ENCODE measurements at regions of chr10 and their contacts with region 1.

Region 1: DNA sequence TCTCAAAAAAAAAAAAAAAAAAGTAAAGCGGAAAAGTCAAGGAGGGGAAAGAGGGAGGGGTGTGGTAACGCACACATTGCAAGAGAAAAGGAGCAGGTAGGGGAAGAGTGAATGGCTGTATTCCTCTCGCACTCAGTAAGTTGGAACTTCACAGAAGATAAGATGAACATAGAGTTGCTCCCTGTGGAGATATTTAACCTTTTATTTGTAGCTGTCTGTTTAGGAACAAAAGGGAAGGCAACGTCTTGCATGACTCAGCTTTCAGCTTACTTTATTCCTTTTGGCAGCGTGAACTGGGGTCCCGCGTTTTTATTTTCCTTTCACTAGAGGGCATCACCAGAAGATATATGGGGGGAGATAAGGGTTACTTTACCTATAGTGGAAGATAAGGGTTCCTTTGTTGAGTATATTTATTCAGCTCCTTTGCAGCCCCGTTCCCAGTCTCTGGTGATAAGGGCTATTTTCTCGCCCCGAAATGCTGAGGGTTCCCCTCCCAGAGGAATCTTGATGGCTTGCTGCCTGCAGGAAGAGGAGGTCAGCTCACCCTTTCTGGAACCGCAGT is 78.5 kb downstream of the APBB1IP start:
- ATAC-seq: no peak
- H3K4me3 ChIP-seq: no peak overlapping the region
- H3K27ac ChIP-seq: no peak overlapping the region
- H3K4me1 ChIP-seq: no peaks in the 10 kb centered on the region

Region 2: DNA sequence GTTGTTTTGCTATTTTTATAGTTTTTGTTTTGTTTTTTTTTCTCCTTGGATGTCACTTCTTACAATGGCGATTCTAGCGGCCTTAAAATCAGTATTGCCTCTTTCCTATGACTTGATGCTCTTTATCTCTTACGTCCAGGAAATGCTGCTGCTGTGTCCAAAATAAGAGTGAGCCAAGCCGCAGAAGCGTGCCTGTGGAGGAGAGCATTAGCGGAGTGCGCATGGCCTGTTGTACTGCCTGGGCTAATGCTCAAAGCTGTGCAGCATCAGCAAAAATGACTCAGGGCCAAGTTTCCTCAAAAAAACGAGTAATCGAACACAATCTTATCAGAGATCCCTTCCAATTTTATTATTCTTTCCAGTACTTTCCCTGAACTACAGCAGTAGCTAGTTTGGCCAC is 318.5 kb before region 1 on chr10:
- in situ Hi-C with region 1: no loop called
- ATAC-seq: no peak
- H3K4me3 ChIP-seq: no peak overlapping the region
- H3K27ac ChIP-seq: no peak overlapping the region
- H3K4me1 ChIP-seq: no peaks in the 10 kb centered on the region

Region 3: GRCh38 chr10:26334932-26335573 is 181.6 kb before region 1 on chr10:
- in situ Hi-C with region 1: loop called in 1 of 9 experiments (anchors 10 kb)
- ATAC-seq: peak in 7 of 8 experiments; percentile 36 to 98 (median 81)
- H3K4me3 ChIP-seq: no peak overlapping the region
- H3K27ac ChIP-seq: no peak overlapping the region
- H3K4me1 ChIP-seq: no peaks in the 10 kb centered on the region

Measured in motor neuron (in vitro differentiated cells).